Caco-2 (cell line): ENCODE measurements at regions of chrX and their contacts with region 1.

Region 1: DNA sequence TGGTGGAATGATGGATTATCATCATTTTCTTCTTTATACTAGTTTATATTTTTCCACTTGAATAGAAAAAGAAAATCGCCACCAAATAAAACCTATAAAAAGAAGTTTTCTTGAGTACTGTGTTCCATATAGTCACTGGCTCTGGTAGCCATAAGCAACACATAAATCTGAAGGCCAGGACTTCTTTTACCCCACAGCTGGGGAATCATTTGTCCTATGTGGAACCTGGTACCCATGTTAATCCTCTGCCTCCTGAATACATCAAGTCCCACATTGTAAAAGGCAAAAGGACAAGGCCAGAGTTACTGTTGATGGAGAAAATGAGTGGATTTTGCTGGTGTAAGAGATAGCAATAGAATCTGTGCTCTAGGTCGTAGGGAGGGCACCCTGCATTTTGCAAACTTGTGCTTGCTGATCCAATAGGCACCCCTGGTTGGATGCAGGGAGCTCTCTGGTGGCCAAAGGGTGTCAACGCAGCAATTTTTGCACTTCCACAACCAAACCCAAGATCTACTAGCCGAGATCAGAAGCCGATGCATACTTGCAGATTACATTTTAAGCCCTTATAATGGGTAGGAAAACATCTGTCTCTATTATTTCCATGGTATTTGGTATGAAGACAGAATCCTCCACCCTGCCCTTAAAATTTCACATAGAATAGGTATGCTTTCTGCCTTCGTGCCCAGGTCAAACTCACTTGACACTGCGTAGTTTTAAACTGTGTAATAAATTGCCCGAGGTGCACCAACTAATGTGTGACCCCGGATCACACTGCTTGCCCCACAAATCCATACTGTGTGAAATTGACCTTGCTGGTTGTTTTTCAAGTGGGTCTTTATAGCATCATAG is 146.2 kb upstream of the SCML1 start:
- DNase-seq: peak; percentile 46 to 50
- H3K4me3 ChIP-seq: no peak overlapping the region
- H3K4me3 Mint-ChIP-seq: no peak overlapping the region
- H3K27ac Mint-ChIP-seq: no peak overlapping the region
- H3K4me1 ChIP-seq: peaks cover 10% of the 10 kb centered on the region
- H3K4me1 Mint-ChIP-seq: peaks cover 8% of the 10 kb centered on the region
- H3K27me3 ChIP-seq: no peaks in the 10 kb centered on the region; the same call in 1 of the 2 replicates
- H3K27me3 Mint-ChIP-seq: no peaks in the 10 kb centered on the region
- CTCF ChIP-seq: peak; percentile 39 to 75

Region 2: GRCh38 chrX:17242470-17242869 is 348.6 kb before region 1 on chrX:
- CTCF ChIA-PET with region 1: interaction called, 7 read pairs
- POLR2A ChIA-PET with region 1: no interaction called
- intact Hi-C with region 1: loop called (anchors 1 kb)
- DNase-seq: peak; percentile 30 to 37
- H3K4me3 ChIP-seq: no peak overlapping the region
- H3K4me3 Mint-ChIP-seq: no peak overlapping the region
- H3K27ac Mint-ChIP-seq: no peak overlapping the region
- H3K4me1 ChIP-seq: no peaks in the 10 kb centered on the region
- H3K4me1 Mint-ChIP-seq: no peaks in the 10 kb centered on the region
- H3K27me3 ChIP-seq: no peaks in the 10 kb centered on the region
- H3K27me3 Mint-ChIP-seq: no peaks in the 10 kb centered on the region
- CTCF ChIP-seq: peak; percentile 55 to 67

Region 3: DNA sequence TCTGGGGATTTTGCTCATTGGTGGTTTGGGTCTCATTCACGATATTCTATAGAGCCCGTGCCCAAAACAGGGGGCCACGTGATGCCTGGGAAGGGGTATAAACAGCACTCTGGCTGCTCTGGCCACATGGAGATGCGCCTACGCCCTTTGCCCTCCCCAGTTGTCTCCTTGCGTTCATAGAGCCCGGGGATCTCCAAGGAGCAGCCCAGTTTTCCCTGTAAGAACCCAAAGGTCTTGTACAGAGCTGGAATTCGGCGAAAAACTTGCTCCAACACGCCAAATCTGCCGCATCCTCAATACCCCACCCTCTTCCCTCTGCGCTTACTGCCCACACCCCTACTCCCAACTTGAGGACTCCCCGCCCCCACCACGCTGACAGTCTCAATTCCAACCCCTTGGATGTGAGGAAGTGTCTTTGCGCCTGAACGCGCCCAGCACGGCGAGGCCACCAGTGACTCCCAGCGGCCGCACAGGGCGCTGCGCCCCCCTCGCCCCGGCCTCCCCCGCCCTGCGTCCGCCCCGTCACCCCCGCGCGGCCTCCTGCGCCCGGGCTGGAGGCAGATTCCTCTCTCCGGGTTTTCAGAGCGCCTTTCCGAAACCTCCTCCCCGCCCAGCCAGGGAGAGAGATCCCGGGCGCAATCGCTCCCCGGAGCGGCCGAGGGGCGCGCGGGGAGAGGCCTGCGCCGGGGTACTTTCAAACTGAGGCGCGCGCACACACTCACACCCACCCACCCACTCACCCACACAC is 216.3 kb before region 1 on chrX and contains the start of gene NHS:
- CTCF ChIA-PET with region 1: no interaction called
- POLR2A ChIA-PET with region 1: no interaction called
- intact Hi-C with region 1: loop called (anchors 1 kb)
- DNase-seq: peak; percentile 59 to 67
- H3K4me3 ChIP-seq: peak within 1 kb of the TSS; percentile 42
- H3K4me3 Mint-ChIP-seq: peak within 1 kb of the TSS; percentile 77
- H3K27ac Mint-ChIP-seq: peak within 1 kb of the TSS; percentile 35
- H3K4me1 ChIP-seq: no peaks in the 10 kb centered on the region
- H3K4me1 Mint-ChIP-seq: no peaks in the 10 kb centered on the region
- H3K27me3 ChIP-seq: no peaks in the 10 kb centered on the region; the same call in 1 of the 2 replicates
- H3K27me3 Mint-ChIP-seq: peaks cover 6% of the 10 kb centered on the region
- CTCF ChIP-seq: peak; percentile 35 to 43
- total RNA-seq, gene NHS: 2.2 and 2.5 TPM in 2 replicates

Region 4: DNA sequence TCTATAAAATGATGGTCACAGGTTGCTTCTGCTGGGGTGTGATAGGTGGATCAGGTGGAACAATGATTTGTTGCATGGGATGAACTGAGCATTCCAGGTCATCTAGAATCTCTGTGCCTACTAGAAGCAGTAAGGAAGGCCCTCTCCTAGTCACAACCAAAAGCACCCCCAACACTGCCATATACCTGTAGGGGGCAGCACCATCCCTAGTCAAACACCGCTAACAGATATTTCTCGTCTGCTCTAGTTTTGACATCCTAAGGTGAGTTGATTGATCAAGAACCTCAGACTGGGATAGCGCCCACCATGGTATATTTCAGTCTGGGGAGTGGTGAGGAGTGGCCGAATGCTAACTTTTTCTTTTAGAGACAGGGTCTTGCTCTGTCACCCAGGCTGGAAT is 55.9 kb before region 1 on chrX:
- CTCF ChIA-PET with region 1: no interaction called
- POLR2A ChIA-PET with region 1: no interaction called
- intact Hi-C with region 1: loop called (anchors 1 kb)
- DNase-seq: peak in 1 of 2 experiments; percentile 37
- H3K4me3 ChIP-seq: no peak overlapping the region
- H3K4me3 Mint-ChIP-seq: no peak overlapping the region
- H3K27ac Mint-ChIP-seq: no peak overlapping the region
- H3K4me1 ChIP-seq: no peaks in the 10 kb centered on the region
- H3K4me1 Mint-ChIP-seq: no peaks in the 10 kb centered on the region
- H3K27me3 ChIP-seq: no peaks in the 10 kb centered on the region
- H3K27me3 Mint-ChIP-seq: no peaks in the 10 kb centered on the region
- CTCF ChIP-seq: peak; percentile 15 to 24

Region 5: DNA sequence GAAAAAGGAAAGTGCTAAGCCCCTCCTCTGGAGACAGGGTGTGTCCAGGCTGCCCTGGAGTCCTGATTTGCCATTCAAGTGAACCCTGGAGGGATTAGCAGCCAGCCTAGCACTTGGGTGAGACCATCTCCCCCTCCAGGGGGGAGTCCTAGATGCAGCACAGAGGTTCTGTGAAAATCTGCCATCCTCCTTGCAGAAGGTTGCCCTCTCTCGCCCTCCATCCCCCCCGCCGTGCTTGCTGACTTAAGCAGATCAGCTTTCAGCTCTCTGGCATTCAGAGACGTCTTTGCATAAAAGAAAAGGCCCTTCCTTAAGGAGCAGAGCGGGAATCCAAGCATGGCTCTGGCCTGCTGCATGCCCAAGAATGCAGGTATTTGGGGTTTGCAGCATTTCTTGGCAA is 44.1 kb after region 1 on chrX:
- CTCF ChIA-PET with region 1: no interaction called
- POLR2A ChIA-PET with region 1: no interaction called
- intact Hi-C with region 1: loop called (anchors 2 kb)
- DNase-seq: peak; percentile 77 to 91
- H3K4me3 ChIP-seq: peak overlapping the region; percentile 32
- H3K4me3 Mint-ChIP-seq: peak overlapping the region; percentile 67
- H3K27ac Mint-ChIP-seq: no peak overlapping the region
- H3K4me1 ChIP-seq: peaks cover 11% of the 10 kb centered on the region; the same call in 1 of the 2 replicates
- H3K4me1 Mint-ChIP-seq: peaks cover 17% of the 10 kb centered on the region
- H3K27me3 ChIP-seq: no peaks in the 10 kb centered on the region
- H3K27me3 Mint-ChIP-seq: no peaks in the 10 kb centered on the region
- CTCF ChIP-seq: no peak

Region 6: GRCh38 chrX:17689971-17690409 is 98.9 kb after region 1 on chrX:
- CTCF ChIA-PET with region 1: no interaction called
- POLR2A ChIA-PET with region 1: no interaction called
- intact Hi-C with region 1: loop called (anchors 1 kb)
- DNase-seq: peak; percentile 42 to 49
- H3K4me3 ChIP-seq: no peak overlapping the region
- H3K4me3 Mint-ChIP-seq: no peak overlapping the region
- H3K27ac Mint-ChIP-seq: no peak overlapping the region
- H3K4me1 ChIP-seq: no peaks in the 10 kb centered on the region
- H3K4me1 Mint-ChIP-seq: no peaks in the 10 kb centered on the region
- H3K27me3 ChIP-seq: no peaks in the 10 kb centered on the region
- H3K27me3 Mint-ChIP-seq: no peaks in the 10 kb centered on the region
- CTCF ChIP-seq: peak; percentile 44 to 45